HepG2 (cell line): ENCODE measurements at regions of chr10 and their contacts with region 1.

Region 1: DNA sequence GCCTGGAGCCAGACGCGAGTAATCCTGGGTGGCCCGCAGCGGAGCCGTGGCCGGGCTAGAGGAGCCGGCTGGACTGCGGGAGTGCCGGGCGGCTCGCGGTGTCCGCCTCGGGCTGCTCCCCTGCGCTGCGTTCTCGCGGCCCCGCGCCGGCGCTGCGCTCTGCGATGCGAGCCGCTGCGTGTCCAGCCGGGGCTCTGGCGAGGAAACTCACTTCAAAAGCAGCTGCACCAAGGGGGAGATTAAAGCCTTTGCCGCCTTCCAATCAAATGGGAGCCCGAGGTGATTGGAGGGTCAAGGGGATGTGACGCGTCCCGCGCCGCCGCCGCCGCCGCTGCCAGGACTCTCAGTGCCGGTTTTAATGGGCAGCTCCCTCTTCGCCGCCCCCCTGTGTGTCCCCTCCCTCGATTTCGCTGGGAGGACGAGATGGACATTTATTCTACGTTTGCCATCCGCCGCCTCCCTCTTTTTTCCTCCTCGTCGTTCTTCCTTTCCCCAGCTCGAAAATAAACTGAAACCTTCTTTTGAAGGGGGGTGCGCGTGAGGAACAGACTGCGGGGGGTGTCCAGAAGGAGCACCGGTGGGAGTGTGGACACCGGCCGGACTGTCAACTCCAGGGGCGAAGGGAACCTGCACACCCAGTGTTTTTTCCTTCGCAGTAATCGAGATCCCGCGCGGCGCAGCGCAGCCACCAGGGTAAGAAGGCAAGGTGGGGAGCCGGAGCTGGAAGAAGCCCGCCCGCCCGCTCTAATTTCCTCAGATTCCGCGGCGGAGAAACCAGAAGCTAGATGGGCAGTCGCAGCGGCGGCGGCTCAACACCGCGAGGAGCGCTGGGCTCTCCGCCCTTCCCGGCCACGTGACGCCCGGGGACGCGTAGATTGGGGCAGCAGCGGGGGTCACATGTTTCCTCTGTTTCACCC is at the start of gene ZNF503:
- DNase-seq: peak; percentile 98
- ATAC-seq: peak; percentile 65
- H3K4me3 ChIP-seq: peak within 1 kb of the TSS; percentile 100
- H3K27ac ChIP-seq: peak within 1 kb of the TSS; percentile 97
- H3K4me1 ChIP-seq: peaks cover 25% of the 10 kb centered on the region
- H3K27me3 ChIP-seq: no peaks in the 10 kb centered on the region; a peak in 1 of 5 replicates
- CTCF ChIP-seq: no peak; the same call in 1 of the 2 replicates
- EP300 ChIP-seq: peak in 1 of 2 experiments; percentile 43; a peak in 1 of 4 replicates
- POLR2A ChIP-seq: peak in 1 of 2 experiments; percentile 98; a peak in 2 of 4 replicates
- RAD21 ChIP-seq: peak; percentile 71
- total RNA-seq, gene ZNF503: 5.8 and 8.3 TPM in 2 replicates

Region 2: DNA sequence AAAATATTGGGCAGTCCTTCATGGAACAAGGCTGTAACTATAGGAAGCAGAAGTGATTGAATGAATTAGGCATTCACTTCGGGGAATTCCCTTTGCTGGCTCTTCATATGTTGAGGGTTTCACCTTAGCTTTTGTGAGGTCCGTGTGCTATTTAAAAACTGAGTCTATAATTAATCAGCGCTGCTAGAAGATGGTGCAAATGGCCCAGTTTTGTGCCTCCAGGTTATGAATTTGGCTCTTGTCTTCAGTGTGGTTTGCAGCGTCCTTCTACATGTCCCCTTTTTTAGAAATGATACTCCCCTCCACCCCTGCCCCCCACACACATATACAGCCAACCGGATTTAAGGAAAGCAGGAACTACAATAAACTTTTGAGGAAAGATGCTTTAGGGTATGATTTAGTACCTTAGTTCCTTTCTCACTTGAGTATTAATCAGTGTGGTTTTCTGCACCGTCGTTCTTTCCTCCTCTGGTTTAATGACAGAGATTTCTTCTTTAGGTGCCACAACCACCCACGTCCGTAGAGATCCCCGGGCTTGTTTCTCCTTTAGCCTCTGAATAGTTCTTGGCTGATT is 401.0 kb before region 1 on chr10:
- CTCF ChIA-PET with region 1: no interaction called
- POLR2A ChIA-PET with region 1: no interaction called
- in situ Hi-C with region 1: no loop called
- intact Hi-C with region 1: no loop called
- DNase-seq: no peak
- ATAC-seq: no peak
- H3K4me3 ChIP-seq: no peak overlapping the region
- H3K27ac ChIP-seq: no peak overlapping the region
- H3K4me1 ChIP-seq: no peaks in the 10 kb centered on the region
- H3K27me3 ChIP-seq: no peaks in the 10 kb centered on the region
- CTCF ChIP-seq: no peak
- EP300 ChIP-seq: no peak
- POLR2A ChIP-seq: no peak
- RAD21 ChIP-seq: no peak

Region 3: DNA sequence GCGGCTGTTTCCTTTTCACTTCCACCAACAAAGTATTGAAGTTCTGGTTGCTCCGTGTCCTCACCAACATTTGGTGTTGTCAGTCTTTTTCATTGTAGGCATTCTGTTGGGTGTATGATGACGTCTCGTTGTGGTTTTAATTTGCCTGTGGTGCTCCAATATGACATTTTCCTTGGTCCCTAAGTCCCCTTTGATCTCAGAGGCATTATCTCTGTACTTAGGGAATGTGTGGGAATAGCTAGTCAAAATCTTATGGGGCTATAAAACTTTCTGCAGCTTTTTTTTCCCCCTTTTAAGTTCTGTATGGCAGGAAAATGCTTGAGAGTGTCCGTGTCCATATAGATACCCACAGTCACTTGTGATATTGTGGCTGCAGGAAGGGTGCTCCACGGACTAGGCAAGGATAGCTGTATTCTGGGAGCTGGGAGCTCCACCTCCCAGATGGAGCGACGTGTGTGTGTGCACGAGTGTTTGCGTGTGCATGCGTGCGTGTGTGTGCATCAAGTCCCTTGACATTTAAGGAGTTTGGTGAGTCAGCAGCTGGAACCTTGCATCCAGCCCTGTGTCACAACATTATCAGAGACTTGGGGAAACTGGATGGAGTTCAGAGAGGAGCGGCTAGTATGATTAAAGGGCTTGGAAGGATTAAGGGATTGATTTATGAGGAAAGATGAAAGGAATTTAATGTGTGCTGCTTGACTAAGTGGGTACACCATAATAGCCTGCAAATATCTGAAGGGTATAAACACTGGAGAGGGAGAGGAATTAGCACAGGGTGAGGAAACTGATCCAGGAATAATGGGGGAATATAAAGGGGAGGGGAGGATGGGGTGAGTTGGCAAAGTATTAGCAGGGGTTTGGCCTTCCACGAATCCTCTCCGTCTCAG is 96.4 kb after region 1 on chr10:
- CTCF ChIA-PET with region 1: no interaction called
- POLR2A ChIA-PET with region 1: interaction called, 4 read pairs
- in situ Hi-C with region 1: no loop called
- intact Hi-C with region 1: loop called (anchors 5 kb)
- DNase-seq: no peak
- ATAC-seq: no peak
- H3K4me3 ChIP-seq: no peak overlapping the region
- H3K27ac ChIP-seq: no peak overlapping the region
- H3K4me1 ChIP-seq: peaks cover 54% of the 10 kb centered on the region
- H3K27me3 ChIP-seq: no peaks in the 10 kb centered on the region
- CTCF ChIP-seq: no peak
- EP300 ChIP-seq: no peak
- POLR2A ChIP-seq: no peak
- RAD21 ChIP-seq: no peak

Region 4: GRCh38 chr10:75651417-75651816 is 249.6 kb after region 1 on chr10:
- CTCF ChIA-PET with region 1: no interaction called
- POLR2A ChIA-PET with region 1: interaction called, 12 read pairs
- in situ Hi-C with region 1: no loop called
- intact Hi-C with region 1: loop called (anchors 10 kb)
- DNase-seq: peak; percentile 13
- ATAC-seq: peak; percentile 59
- H3K4me3 ChIP-seq: no peak overlapping the region
- H3K27ac ChIP-seq: no peak overlapping the region
- H3K4me1 ChIP-seq: peaks cover 78% of the 10 kb centered on the region
- H3K27me3 ChIP-seq: no peaks in the 10 kb centered on the region
- CTCF ChIP-seq: peak; percentile 44; the same call in 1 of the 2 replicates
- EP300 ChIP-seq: no peak
- POLR2A ChIP-seq: no peak
- RAD21 ChIP-seq: no peak

Region 5: DNA sequence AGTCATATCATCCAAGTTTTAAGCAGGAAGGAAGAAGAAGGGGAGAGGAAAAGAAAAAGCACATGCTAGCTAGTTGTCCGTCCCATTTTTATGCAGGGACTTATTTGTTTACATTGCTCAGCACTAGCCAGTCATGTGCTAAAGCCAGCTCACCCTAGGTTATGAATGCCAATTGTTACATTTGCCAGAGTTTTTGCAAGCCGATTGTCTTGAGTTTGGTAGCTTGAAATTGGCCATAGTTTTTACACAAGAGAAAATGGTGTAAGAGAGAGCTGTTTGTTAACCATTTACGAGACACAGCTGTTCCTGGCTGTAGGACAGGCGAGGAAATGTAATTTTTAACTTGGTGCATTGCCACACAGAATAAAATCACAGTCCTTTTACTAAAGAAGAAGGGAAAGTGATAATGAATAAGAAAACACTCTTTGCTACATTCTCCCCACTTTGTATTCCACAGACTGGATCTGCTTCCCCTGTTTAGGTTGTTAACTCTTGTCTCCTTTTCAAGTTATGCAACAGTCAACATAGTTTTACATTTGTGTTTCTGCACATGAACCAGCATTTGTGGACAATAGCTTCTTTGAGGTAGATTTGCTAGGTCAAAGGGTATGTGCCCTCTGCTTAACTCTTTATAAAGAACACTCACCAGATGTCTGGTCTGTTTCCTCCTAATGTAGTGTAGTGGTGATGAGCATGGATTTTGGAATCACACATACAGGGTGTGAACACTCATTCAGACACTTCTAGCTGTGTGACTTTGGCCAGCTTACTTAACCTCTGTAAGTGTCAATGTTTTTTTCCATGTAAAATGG is 386.8 kb after region 1 on chr10:
- CTCF ChIA-PET with region 1: no interaction called
- POLR2A ChIA-PET with region 1: interaction called, 20 read pairs
- in situ Hi-C with region 1: no loop called
- intact Hi-C with region 1: loop called (anchors 2 kb)
- DNase-seq: peak; percentile 94
- ATAC-seq: peak; percentile 88
- H3K4me3 ChIP-seq: peak overlapping the region in 2 of 3 experiments; percentile 21 to 42; a peak in 2 of 6 replicates
- H3K27ac ChIP-seq: peak overlapping the region; percentile 85
- H3K4me1 ChIP-seq: peaks cover 58% of the 10 kb centered on the region
- H3K27me3 ChIP-seq: no peaks in the 10 kb centered on the region
- CTCF ChIP-seq: no peak
- EP300 ChIP-seq: peak; percentile 45 to 87; a peak in 2 of 4 replicates
- POLR2A ChIP-seq: no peak
- RAD21 ChIP-seq: no peak; the same call in 1 of the 2 replicates

Region 6: DNA sequence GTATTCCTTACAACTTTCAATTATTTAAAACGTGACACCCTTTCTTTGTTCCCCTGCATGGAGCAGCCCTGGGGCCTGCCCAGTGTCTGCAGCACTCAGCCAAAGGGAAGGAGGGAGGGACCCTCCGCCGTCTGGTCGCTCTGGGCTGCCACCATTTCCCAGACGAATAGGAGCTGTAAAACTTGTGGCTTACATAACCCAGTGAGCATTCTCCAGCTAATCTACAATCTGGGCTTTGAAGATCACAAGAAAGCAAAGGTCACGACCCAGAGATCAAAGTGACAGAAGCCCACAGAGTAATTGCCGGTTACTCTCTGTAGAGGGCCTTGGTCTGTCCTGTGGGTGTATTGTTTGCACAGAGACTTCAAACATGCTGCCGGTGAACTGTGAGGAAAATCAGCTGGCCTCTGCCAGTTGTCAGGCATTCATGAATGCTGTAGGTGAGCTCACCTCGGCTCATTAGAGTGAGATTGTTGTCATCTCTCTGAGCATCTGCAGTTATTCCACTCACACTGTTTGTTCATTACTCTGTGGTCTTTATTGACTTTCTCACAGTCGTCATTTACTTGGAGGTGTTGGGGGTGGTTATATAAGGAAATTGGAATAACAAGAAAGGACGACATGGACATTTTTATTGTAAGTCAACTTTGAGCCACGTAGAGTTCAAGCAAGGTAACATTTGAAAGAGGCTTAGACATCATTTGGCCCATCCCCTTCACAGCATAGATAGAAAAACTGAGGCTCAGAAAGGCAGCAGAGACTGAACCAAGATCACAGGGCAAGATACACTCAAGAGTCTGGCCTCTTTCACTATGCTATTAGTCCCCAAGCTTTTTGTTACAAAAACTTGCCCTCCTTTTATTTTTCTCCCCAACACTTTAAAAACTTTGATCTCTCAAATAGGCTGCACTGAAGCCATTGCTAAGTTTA is 649.4 kb after region 1 on chr10:
- CTCF ChIA-PET with region 1: no interaction called
- POLR2A ChIA-PET with region 1: interaction called, 63 read pairs
- in situ Hi-C with region 1: no loop called
- intact Hi-C with region 1: no loop called
- DNase-seq: peak; percentile 100
- ATAC-seq: peak; percentile 97
- H3K4me3 ChIP-seq: peak overlapping the region in 1 of 3 experiments; percentile 24; a peak in 1 of 6 replicates
- H3K27ac ChIP-seq: peak overlapping the region; percentile 93
- H3K4me1 ChIP-seq: peaks cover 70% of the 10 kb centered on the region
- H3K27me3 ChIP-seq: no peaks in the 10 kb centered on the region
- CTCF ChIP-seq: peak; percentile 37; the same call in 1 of the 2 replicates
- EP300 ChIP-seq: peak; percentile 99
- POLR2A ChIP-seq: peak; percentile 44 to 59
- RAD21 ChIP-seq: no peak